ENCODE measurements at regions of chr2 and their contacts with region 1.

Region 1: DNA sequence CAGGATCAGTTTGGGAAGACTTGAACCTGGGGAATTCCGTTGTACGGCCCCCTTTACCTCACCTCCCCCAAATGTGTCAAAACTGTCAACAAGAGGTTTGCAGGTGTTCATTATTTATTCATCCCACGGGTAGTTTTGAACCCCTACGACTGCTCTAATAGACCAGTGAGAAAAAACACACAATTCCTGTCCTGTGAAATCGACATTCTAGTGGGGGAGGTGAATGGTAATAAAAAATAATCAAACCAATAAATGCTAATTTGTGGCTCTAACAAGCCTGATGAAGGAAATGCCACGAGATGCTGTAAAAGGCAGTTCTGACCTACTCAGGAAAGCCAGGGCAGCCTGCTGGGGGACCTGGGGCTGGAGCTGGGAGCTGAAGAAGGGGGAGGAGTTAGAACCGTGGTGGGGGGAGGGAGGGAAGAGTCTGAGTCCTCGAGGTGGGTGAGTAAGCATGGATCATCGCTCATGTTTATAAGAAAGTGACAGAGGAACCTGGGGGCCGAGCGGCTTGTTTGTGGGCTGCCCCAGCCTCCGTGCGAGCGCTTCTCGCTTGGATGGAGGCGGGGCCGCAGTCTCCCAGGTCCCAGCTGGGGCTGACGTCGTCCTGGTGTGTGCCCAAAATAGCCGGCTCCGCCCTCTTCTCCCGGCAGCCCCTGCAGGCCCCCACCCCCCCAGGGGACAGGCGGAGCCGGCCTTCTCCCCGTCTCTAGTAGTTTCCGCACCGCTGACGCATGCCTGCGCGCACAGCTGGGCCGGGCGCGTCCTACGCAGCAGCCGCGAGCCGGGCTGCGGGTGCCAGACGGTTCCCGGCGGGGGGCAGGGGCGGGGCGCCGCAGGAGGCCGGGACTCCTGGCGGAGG is at the start of gene DNAJB2:
- DNase-seq: peak; percentile 99
- ATAC-seq: peak; percentile 86
- H3K4me3 ChIP-seq: peak within 1 kb of the TSS; percentile 86
- H3K27ac ChIP-seq: peak within 1 kb of the TSS; percentile 85
- H3K4me1 ChIP-seq: peaks cover 38% of the 10 kb centered on the region
- H3K27me3 ChIP-seq: no peaks in the 10 kb centered on the region
- CTCF ChIP-seq: no peak
- total RNA-seq, gene DNAJB2: 62.3 and 98.4 TPM in 2 replicates

Region 2: DNA sequence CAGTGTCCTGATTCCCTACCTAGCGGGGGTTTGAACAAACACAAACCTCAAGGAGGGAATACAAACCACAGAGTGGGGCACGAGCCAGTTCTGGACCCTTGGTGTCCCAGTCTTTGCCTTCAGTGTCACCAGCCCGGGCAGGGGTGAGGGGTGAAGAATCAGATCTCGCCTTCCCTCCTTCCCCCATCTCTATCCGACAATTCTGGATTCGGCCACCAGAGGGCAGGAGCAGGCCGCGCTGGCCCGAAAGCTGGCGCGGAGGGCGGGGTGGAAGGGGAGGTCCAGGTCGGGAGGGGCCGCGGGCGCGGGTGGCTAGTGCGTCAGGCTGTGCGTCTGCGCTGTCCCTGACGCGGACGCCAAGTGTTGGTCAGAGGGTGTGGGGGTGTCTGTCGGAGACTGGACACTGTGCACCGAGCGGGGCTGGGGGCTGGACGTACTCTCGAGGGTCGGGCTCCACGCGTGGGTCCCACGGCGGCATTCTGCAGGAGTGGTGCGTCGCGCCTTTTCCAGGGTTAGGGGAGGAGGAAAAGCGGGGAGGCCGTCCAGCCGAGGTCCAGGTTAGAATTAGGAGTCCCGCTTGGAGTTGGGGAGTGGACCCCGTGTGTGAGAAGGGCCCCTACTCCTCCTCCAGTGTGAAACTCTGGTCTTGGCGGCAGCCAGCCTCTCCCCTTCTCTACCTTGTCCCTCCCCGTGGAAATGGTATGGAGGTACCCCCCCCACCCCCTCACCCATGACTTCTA is 282.7 kb before region 1 on chr2:
- CTCF ChIA-PET with region 1: interaction called, 10 read pairs
- POLR2A ChIA-PET with region 1: no interaction called
- intact Hi-C with region 1: no loop called
- DNase-seq: peak; percentile 92
- ATAC-seq: peak; percentile 79
- H3K4me3 ChIP-seq: peak overlapping the region; percentile 65
- H3K27ac ChIP-seq: no peak overlapping the region
- H3K4me1 ChIP-seq: peaks cover 30% of the 10 kb centered on the region
- H3K27me3 ChIP-seq: no peaks in the 10 kb centered on the region
- CTCF ChIP-seq: peak; percentile 93

Region 3: DNA sequence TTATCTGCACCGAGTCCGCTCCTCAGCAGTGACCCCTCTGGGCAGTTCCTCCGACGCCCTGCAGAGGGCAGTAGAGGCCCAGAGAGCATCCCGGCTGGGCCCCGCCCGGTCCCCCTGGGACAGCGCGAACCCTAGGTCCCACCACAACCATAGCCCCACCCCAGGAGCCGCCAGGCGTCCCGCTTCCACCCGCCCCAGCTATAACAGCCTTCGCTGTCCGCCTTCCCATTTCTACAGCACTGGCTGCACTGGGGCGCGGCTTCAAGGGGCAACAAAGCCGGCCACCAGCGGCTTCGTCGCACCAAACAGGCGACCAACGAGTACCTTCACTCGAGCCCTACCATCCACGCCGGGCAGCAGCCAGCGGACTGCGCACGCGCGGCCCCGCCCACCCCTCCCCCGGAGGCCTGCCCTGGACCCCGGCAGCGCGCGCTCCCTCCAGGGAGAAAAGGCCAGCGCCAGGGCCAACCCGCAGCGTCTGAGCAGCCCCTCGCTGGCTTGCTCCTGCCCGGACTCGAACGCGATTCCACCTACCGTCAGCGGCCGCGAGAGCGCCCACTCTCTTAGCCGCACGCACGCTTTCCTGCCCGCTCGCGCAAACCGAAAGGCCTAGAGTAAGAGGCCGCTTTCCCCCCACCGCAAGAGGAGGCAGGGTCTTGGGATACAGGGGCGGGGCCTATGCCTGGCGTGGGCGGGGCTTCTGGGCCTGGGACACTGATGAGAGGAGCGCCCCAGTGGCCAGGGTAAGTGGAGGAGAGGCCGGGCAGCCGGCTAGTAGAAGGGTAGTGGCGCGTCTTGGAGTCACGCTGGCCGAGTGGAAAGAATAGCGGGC is 118.5 kb before region 1 on chr2 and contains the start of gene NHEJ1:
- CTCF ChIA-PET with region 1: no interaction called
- POLR2A ChIA-PET with region 1: no interaction called
- intact Hi-C with region 1: loop called (anchors 1 kb)
- DNase-seq: peak; percentile 92
- ATAC-seq: peak; percentile 91
- H3K4me3 ChIP-seq: peak within 1 kb of the TSS; percentile 79
- H3K27ac ChIP-seq: peak within 1 kb of the TSS; percentile 62
- H3K4me1 ChIP-seq: peaks cover 26% of the 10 kb centered on the region
- H3K27me3 ChIP-seq: no peaks in the 10 kb centered on the region
- CTCF ChIP-seq: peak; percentile 90
- total RNA-seq, gene NHEJ1: 16.7 and 18.5 TPM in 2 replicates

Region 4: GRCh38 chr2:219218732-219219701 is 59.9 kb before region 1 on chr2 and contains the start of gene ABCB6:
- CTCF ChIA-PET with region 1: interaction called, 4 read pairs
- POLR2A ChIA-PET with region 1: no interaction called
- intact Hi-C with region 1: loop called (anchors 2 kb)
- DNase-seq: peak; percentile 83
- ATAC-seq: peak; percentile 66
- H3K4me3 ChIP-seq: peak within 1 kb of the TSS; percentile 69
- H3K27ac ChIP-seq: peak within 1 kb of the TSS; percentile 77
- H3K4me1 ChIP-seq: peaks cover 19% of the 10 kb centered on the region
- H3K27me3 ChIP-seq: no peaks in the 10 kb centered on the region
- CTCF ChIP-seq: no peak
- total RNA-seq, gene ABCB6: 21.1 and 23.9 TPM in 2 replicates

Region 5: DNA sequence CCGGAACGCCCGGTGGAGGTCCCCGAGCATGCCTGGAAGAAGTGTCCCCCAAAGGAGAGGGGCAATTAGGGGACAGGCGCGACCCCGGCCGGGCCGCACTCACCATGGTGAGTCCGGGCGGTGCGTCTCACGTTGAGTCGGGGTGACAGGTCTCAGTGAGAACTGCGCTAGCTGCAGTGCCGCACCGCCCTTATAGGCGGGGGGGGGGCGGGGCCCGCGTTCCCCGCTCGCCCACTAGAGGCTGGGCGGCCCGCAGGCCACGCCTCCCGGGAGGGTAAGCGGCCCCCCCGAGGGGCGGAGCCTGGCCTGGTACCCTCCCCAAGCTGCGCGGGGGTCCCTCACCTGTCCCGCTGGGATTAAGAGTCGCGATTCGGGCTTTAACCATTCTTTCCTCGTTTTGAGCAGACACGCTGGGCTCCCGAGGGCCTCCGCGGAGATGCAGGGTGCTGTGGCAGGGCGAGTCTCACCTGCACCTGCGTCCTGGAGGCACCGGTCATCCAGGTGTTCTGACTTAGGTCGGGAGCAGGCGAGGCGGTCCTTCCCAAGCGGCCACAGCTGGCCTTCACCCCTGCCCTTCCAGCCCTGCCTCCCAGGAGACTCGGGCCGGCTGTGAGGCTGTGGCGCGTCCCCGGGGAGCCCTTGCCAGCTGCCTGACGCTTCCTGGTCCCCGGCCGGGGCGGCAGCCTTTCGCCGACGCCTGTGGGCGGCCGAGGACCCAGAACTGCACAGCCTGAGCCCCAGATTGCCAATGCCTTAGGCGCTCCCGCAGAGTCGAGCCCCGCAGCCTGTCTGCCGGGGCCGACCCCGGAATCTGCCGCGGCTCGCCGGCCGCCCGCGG is 24.9 kb before region 1 on chr2 and contains the start of gene TUBA4A:
- CTCF ChIA-PET with region 1: no interaction called
- POLR2A ChIA-PET with region 1: interaction called, 20 read pairs
- intact Hi-C with region 1: loop called (anchors 1 kb)
- DNase-seq: peak; percentile 90
- ATAC-seq: peak; percentile 58
- H3K4me3 ChIP-seq: peak within 1 kb of the TSS; percentile 74
- H3K27ac ChIP-seq: peak within 1 kb of the TSS; percentile 33
- H3K4me1 ChIP-seq: peaks cover 38% of the 10 kb centered on the region
- H3K27me3 ChIP-seq: no peaks in the 10 kb centered on the region
- CTCF ChIP-seq: no peak
- total RNA-seq, gene TUBA4A: 75.4 and 87.9 TPM in 2 replicates

Region 6: DNA sequence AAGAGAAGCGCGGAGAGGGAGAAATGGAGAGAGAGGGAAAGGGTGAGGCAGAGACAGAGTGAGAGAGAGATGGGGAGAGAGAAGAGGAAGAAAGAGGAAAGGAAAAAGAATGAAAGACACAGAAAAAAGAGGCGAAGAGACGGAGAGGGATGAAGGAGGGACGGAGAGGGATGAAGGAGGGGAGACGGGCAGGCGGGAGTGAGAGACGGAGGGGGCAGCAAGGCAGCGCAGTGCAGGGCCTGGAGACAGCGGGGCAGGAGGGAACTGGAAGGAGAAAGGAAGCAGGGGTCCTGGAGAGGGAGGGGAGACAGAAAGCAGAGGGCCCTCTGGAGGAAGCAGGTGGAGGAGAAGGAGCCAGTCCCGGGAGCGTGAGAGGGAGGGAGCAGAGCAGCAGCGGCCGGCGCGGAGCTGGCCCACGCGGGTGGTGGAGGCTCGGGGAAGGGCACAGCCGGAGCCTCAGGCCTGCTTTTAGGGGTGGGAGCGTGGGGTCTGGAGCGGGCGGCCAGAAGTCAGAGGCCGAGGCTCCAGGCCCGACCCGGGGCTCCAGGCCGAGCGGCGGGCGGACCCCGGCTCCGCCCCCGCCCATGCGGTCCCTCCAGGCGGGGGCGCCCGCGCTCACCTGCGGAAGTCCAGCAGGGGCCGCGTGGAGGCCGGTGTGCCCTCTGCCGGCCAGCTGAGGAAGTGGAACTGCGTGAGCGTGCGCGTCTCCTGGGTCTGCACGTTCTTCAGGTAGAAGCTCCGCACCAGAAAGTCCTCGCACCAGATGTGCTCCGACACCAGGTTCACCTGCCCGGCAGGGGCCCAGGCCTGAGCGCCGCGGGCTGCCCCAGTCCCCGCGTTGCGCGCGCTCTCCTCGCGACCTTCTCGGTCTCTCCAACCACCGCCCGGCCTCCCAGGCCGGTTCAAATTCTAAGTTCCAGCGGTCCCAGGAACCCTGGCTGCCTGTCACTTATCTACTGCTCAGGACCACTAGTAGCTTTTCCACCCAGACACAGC is 15.8 kb after region 1 on chr2:
- CTCF ChIA-PET with region 1: interaction called, 39 read pairs
- POLR2A ChIA-PET with region 1: interaction called, 5 read pairs
- intact Hi-C with region 1: loop called (anchors 1 kb)
- DNase-seq: peak; percentile 93
- ATAC-seq: peak; percentile 81
- H3K4me3 ChIP-seq: peak overlapping the region; percentile 72
- H3K27ac ChIP-seq: no peak overlapping the region
- H3K4me1 ChIP-seq: peaks cover 20% of the 10 kb centered on the region
- H3K27me3 ChIP-seq: no peaks in the 10 kb centered on the region
- CTCF ChIP-seq: peak; percentile 95

Measured in PC-3 (cell line).